K562 (cell line): ENCODE measurements at regions of chr4 and their contacts with region 1.

Region 1: DNA sequence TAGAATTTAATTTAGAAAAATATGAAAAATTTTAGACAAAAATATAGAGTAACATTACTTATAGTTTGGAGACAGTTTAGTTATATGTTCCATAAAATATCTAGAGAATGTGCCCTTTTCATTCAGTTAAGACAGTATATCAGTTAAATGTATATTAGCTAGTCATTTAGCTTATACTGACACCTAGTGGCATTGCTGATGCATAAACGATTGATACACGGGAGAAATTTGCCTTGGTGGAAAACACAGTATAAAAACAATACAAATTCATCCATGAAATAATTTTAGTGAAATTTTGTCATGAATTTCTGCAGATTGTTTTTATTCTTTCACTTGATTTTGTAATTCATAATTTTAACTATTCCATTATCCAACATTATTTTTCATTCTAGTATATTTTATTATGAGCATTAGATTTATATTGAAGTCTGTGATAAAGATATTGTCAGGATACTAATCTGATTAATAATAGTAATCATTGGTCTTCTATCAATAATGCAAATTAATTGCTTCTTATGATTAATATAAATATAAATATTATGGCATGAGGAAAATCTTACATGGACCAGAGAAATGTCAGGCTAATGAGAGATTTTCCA is 219.0 kb downstream of the TLL1 start:
- DNase-seq: peak; percentile 13 to 48 (median 16)
- ATAC-seq: peak; percentile 71; the same call in 2 of the 3 replicates
- H3K4me3 ChIP-seq: no peak overlapping the region
- H3K27ac ChIP-seq: no peak overlapping the region
- H3K4me1 ChIP-seq: no peaks in the 10 kb centered on the region
- H3K27me3 ChIP-seq: no peaks in the 10 kb centered on the region
- CTCF ChIP-seq: peak; percentile 31 to 71 (median 40); a peak in 4 of 6 replicates
- EP300 ChIP-seq: no peak
- POLR2A ChIP-seq: no peak
- RAD21 ChIP-seq: peak; percentile 73 to 74

Region 2: DNA sequence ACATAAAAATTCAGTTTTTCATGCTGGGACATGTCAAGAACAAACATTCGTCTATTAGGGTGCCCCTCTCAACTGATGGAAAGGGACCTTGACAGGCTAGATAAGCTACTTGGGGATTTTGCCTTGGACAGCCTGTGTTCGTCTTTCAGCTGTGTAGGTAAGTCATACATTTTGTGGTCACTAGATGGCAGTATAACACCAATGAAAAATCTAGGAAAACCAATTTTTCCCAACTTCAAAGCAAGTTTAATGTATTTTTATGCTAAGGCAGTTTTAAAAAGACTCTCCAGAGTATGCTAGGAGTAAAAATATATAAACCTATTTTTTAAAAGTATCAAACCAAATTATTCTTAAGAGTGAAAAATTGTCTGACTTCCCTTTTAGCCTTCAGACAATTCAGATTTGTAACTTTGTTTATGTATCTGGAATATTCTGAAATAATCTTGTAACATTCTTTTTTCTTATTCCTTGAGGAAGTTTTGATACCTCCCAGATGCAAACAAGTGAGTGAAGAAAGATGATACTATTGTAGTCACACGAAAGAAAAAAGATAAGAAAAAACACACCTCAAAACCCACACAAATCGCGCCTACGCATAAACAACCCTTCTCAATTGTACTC is 554.9 kb before region 1 on chr4:
- CTCF ChIA-PET with region 1: interaction called, 14 read pairs
- POLR2A ChIA-PET with region 1: no interaction called
- in situ Hi-C with region 1: loop called (anchors 10 kb)
- intact Hi-C with region 1: loop called (anchors 1 kb)
- DNase-seq: peak; percentile 35 to 57 (median 46)
- ATAC-seq: peak; percentile 81
- H3K4me3 ChIP-seq: no peak overlapping the region
- H3K27ac ChIP-seq: no peak overlapping the region
- H3K4me1 ChIP-seq: no peaks in the 10 kb centered on the region
- H3K27me3 ChIP-seq: no peaks in the 10 kb centered on the region; a peak in 2 of 5 replicates
- CTCF ChIP-seq: peak; percentile 36 to 62 (median 55); a peak in 5 of 6 replicates
- EP300 ChIP-seq: no peak
- POLR2A ChIP-seq: no peak
- RAD21 ChIP-seq: peak; percentile 68 to 75

Region 3: DNA sequence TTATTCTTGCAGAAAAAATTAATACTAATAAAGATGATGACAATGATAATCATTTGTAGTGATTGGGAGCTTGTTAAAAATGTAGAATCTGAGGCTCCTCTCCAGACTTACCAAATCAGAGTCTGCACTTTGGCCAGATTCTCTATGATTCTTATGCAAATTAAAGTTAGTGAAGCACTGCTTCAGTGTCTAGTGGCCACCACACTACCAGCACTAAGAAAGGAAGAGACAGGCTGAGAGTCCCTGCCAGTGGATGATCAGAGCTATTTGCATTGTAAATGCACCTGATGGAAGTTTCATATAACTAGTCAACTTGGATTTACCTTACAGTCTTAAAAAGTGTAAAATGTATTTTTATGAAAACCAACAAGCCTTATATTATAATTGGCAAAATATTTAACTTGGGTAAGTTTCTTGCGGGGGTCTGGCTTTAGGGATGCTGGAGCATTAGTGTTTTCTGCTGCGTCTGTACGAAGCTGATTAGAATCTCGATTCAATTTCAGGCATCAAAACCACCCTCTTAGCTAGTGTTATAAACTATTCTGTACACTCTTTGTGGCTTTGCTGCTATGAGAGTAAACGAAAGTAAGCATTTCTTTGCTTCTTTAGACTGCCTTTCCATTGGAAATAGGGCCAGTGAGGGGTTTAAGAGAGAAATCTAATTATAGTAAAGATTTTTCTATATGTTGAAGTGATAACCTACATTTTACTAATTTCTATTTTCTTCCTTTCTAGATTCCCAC is 104.9 kb before region 1 on chr4:
- CTCF ChIA-PET with region 1: no interaction called
- POLR2A ChIA-PET with region 1: no interaction called
- in situ Hi-C with region 1: no loop called
- intact Hi-C with region 1: no loop called
- DNase-seq: no peak
- ATAC-seq: no peak
- H3K4me3 ChIP-seq: no peak overlapping the region
- H3K27ac ChIP-seq: no peak overlapping the region
- H3K4me1 ChIP-seq: no peaks in the 10 kb centered on the region
- H3K27me3 ChIP-seq: no peaks in the 10 kb centered on the region
- CTCF ChIP-seq: no peak
- EP300 ChIP-seq: no peak
- POLR2A ChIP-seq: no peak
- RAD21 ChIP-seq: no peak

Region 4: GRCh38 chr4:166252487-166253402 is 160.7 kb after region 1 on chr4:
- CTCF ChIA-PET with region 1: no interaction called
- POLR2A ChIA-PET with region 1: no interaction called
- in situ Hi-C with region 1: no loop called
- intact Hi-C with region 1: no loop called
- DNase-seq: peak in 2 of 4 experiments; percentile 5 to 7
- ATAC-seq: no peak
- H3K4me3 ChIP-seq: no peak overlapping the region
- H3K27ac ChIP-seq: no peak overlapping the region
- H3K4me1 ChIP-seq: no peaks in the 10 kb centered on the region
- H3K27me3 ChIP-seq: no peaks in the 10 kb centered on the region
- CTCF ChIP-seq: no peak; a peak in 1 of 6 replicates
- EP300 ChIP-seq: no peak
- POLR2A ChIP-seq: no peak
- RAD21 ChIP-seq: no peak